CD4-positive, alpha-beta memory T cell (primary cell): ENCODE measurements at regions of chr17 and their contacts with region 1.

Region 1: DNA sequence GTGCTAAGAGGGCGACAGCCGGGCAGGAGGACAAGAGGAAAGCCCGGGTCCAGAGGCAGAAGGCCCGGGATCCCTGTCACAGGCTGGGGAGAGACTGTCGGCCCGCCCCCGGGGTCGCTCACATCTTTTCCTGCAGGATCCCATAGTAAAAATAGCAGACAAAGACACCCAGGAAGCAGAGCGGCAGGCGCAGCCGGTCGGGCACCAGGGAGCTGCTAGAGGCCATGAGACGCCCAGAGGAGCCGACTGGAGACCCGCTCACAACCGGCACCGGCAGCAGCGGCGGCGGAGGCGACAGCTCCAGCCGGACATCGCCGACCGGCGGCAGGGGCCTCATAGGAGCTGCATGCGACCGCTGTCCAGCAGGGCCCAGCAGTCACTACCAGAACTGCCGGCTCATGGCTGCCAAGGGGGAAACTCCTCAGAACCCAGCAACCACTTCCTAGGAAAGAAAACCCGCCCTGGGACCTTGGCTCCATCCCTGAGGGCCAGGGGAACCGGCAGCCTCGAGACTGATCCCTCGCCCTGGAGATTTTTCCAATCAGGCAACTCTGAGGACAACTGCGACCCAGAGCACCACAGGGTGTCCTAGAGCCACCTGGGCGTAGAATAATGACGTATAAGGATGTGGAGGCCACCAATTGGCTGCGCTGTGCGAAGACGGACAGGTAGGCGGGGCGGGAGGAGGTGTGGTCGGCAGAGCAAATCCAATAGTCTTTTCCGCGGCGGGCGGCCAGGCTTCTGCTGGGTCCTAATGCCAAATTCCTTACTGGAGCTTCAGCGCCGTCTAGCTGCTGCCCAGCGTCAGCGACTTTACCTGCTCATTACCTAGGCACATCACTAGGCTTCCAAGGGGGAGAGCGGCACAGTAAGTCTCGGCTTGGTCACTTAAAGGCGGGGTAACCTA is at the start of gene SLC35B1:
- DNase-seq: peak; percentile 97 to 99 (median 98)
- H3K4me3 ChIP-seq: peak within 1 kb of the TSS; percentile 70 to 86
- H3K4me3 Mint-ChIP-seq: peak within 1 kb of the TSS; percentile 93 to 97 (median 96)
- H3K27ac ChIP-seq: peak within 1 kb of the TSS; percentile 90
- H3K27ac Mint-ChIP-seq: peak within 1 kb of the TSS; percentile 95 to 99 (median 98)
- H3K4me1 ChIP-seq: peaks cover 33% of the 10 kb centered on the region
- H3K4me1 Mint-ChIP-seq: peaks cover 35 to 51% (median 45%) of the 10 kb centered on the region in 4 donors
- H3K27me3 ChIP-seq: no peaks in the 10 kb centered on the region
- H3K27me3 Mint-ChIP-seq: no peaks in the 10 kb centered on the region
- total RNA-seq, gene SLC35B1: 48.4 to 52.1 TPM

Region 2: DNA sequence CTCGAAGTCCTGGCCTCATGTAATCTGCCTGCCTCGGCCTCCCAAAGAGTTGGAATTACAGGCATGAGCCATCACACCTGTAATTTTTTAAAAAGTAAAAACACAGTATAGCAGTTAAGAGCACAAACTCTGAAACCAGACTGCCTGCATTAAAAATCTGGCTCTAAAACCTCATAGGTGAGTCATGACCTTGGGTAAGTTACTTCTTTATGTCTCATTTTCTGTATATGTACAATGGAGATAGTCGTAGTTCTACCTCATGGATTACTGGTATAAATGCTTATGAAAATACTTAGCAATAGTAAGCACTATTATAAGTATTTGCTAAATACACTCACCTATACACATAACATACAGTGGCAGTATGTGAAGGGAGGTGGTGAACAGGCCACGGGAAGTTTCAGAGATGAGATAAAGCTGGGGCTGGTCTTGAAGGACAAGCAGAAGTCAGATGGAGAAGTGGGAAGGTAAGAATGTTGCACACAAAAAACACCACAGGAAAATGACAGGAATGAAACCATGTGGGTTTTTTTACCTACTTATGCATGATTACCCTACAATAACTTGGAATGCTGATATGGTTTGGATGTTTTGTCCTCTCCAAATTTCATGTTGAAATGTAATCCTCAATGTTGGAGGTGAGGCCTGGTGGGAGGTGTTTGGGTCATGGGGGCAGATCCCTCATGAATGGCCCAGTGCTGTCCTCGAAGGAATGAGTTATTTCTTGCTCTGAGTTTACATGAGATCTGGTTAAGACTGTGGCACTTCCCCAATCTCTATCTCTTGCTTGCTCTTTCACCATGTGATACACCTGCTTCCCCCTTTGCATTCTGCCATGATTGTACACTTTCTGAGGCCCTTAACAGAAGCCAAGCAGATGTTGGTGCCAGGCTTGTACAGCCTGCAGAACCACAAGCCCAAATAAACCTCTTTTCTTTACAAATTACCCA is 379.8 kb before region 1 on chr17:
- CTCF ChIA-PET with region 1: no interaction called
- POLR2A ChIA-PET with region 1: no interaction called
- intact Hi-C with region 1: no loop called
- DNase-seq: no peak
- H3K4me3 ChIP-seq: no peak overlapping the region
- H3K4me3 Mint-ChIP-seq: peak overlapping the region in 4 of 8 donors; percentile 4 to 35 (median 20)
- H3K27ac ChIP-seq: no peak overlapping the region
- H3K27ac Mint-ChIP-seq: peak overlapping the region; percentile 10 to 90 (median 60)
- H3K4me1 ChIP-seq: peaks cover 26% of the 10 kb centered on the region
- H3K4me1 Mint-ChIP-seq: peaks cover 37 to 63% (median 51%) of the 10 kb centered on the region in 4 donors
- H3K27me3 ChIP-seq: no peaks in the 10 kb centered on the region
- H3K27me3 Mint-ChIP-seq: no peaks in the 10 kb centered on the region

Region 3: DNA sequence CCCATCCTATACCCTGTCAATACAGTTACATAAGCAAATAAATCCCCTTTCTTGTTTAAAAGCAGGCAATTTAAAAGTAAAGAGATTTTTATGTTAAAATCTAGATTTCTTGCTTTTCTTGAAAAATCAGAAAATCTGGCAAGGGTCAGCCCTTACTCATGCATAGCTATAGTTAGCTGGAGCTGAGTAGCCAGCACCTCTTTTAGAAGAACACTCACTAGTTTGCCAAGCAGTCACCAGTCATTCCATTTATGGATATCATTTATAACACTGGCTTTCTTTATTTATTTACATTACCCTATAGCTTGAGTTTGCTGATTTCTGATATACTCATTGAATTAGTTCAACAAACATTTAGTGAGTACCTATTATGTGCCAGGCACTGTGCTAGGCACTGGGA is 86.4 kb before region 1 on chr17:
- CTCF ChIA-PET with region 1: no interaction called
- POLR2A ChIA-PET with region 1: no interaction called
- intact Hi-C with region 1: no loop called
- DNase-seq: no peak
- H3K4me3 ChIP-seq: no peak overlapping the region
- H3K4me3 Mint-ChIP-seq: no peak overlapping the region
- H3K27ac ChIP-seq: no peak overlapping the region
- H3K27ac Mint-ChIP-seq: peak overlapping the region in 4 of 7 donors; percentile 41 to 73 (median 66)
- H3K4me1 ChIP-seq: peaks cover 15% of the 10 kb centered on the region
- H3K4me1 Mint-ChIP-seq: peaks cover 22 to 43% (median 30%) of the 10 kb centered on the region in 4 donors
- H3K27me3 ChIP-seq: no peaks in the 10 kb centered on the region
- H3K27me3 Mint-ChIP-seq: no peaks in the 10 kb centered on the region

Region 4: DNA sequence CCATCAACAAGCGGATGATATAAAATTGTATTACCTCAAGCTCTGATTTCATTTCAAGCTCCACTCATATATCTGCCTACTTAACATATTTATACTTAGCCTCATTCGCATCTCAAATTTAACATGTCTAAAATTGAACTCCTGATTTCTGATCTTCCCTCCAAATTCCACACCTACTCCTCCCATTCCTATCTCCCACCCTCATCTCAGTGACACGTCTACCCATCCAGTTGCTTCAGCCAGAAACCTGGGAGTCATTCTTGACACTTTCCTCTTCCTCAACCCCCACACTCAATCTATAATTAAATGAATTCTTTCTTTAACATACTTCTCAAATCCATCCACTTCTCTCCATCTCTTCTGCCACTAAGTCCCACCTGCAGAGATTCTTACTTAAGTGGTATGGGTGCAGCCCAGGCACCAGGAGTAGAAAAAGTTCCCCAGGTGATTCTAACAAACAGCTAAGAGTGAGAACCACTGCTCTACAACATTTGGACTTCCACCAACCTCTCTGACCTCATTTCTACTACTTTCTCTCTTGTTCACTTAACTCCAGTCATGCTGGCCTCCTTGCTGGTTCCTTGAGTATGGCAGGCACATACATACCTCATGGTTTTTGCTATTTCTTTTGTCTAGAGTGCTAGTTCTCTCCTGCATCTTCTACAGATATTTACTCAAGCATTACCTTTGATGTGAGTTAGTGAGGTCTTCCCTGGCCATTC is 48.0 kb before region 1 on chr17:
- CTCF ChIA-PET with region 1: no interaction called
- POLR2A ChIA-PET with region 1: no interaction called
- intact Hi-C with region 1: no loop called
- DNase-seq: no peak
- H3K4me3 ChIP-seq: no peak overlapping the region
- H3K4me3 Mint-ChIP-seq: peak overlapping the region in 3 of 8 donors; percentile 3 to 60 (median 13)
- H3K27ac ChIP-seq: no peak overlapping the region
- H3K27ac Mint-ChIP-seq: peak overlapping the region in 5 of 7 donors; percentile 18 to 50 (median 31)
- H3K4me1 ChIP-seq: peaks cover 34% of the 10 kb centered on the region
- H3K4me1 Mint-ChIP-seq: peaks cover 38 to 52% (median 47%) of the 10 kb centered on the region in 4 donors
- H3K27me3 ChIP-seq: no peaks in the 10 kb centered on the region
- H3K27me3 Mint-ChIP-seq: no peaks in the 10 kb centered on the region

Region 5: GRCh38 chr17:49677933-49678847 is 29.7 kb before region 1 on chr17 and contains the start of gene SPOP:
- CTCF ChIA-PET with region 1: interaction called, 4 read pairs
- POLR2A ChIA-PET with region 1: interaction called, 7 read pairs
- intact Hi-C with region 1: loop called (anchors 1 kb)
- DNase-seq: peak; percentile 99 to 100 (median 100)
- H3K4me3 ChIP-seq: peak within 1 kb of the TSS; percentile 95 to 100
- H3K4me3 Mint-ChIP-seq: peak within 1 kb of the TSS; percentile 91 to 99 (median 94)
- H3K27ac ChIP-seq: peak within 1 kb of the TSS; percentile 94
- H3K27ac Mint-ChIP-seq: peak within 1 kb of the TSS; percentile 93 to 99 (median 98)
- H3K4me1 ChIP-seq: peaks cover 42% of the 10 kb centered on the region
- H3K4me1 Mint-ChIP-seq: peaks cover 35 to 52% (median 42%) of the 10 kb centered on the region in 4 donors
- H3K27me3 ChIP-seq: no peaks in the 10 kb centered on the region
- H3K27me3 Mint-ChIP-seq: peaks cover 0 to 1% of the 10 kb centered on the region in 2 donors
- total RNA-seq, gene SPOP: 83.1 to 86.1 TPM

Region 6: GRCh38 chr17:49722066-49722465 is 14.2 kb after region 1 on chr17:
- CTCF ChIA-PET with region 1: interaction called, 12 read pairs
- POLR2A ChIA-PET with region 1: interaction called, 9 read pairs
- intact Hi-C with region 1: no loop called
- DNase-seq: no peak
- H3K4me3 ChIP-seq: no peak overlapping the region
- H3K4me3 Mint-ChIP-seq: no peak overlapping the region
- H3K27ac ChIP-seq: no peak overlapping the region
- H3K27ac Mint-ChIP-seq: peak overlapping the region; percentile 46 to 81 (median 72)
- H3K4me1 ChIP-seq: peaks cover 22% of the 10 kb centered on the region
- H3K4me1 Mint-ChIP-seq: peaks cover 18 to 46% (median 32%) of the 10 kb centered on the region in 4 donors
- H3K27me3 ChIP-seq: no peaks in the 10 kb centered on the region
- H3K27me3 Mint-ChIP-seq: no peaks in the 10 kb centered on the region

Region 7: DNA sequence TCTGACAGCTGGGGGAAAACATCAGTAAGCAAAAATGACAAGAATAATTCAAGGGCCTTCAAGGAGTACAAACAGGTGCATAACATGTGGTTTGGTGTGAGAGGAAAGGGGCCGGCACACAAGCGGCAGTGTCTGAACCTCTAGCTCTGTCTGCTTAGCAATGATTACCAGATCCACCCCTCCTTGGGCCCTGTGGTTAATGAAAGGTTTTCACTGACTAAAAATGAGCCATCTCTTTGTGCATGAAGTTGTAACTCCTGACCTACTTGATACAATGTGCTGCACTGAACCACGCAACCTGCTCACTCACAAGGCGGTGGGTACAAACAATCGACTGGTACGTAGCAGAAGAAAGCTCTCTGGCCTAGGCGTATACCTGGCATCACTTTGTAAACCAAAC is 40.9 kb after region 1 on chr17:
- CTCF ChIA-PET with region 1: interaction called, 51 read pairs
- POLR2A ChIA-PET with region 1: interaction called, 233 read pairs
- intact Hi-C with region 1: no loop called
- DNase-seq: peak; percentile 74 to 91 (median 80)
- H3K4me3 ChIP-seq: peak overlapping the region in 1 of 2 donors; percentile 27
- H3K4me3 Mint-ChIP-seq: peak overlapping the region; percentile 38 to 90 (median 80)
- H3K27ac ChIP-seq: peak overlapping the region; percentile 89
- H3K27ac Mint-ChIP-seq: peak overlapping the region; percentile 94 to 99 (median 97)
- H3K4me1 ChIP-seq: peaks cover 97% of the 10 kb centered on the region
- H3K4me1 Mint-ChIP-seq: peaks cover 56 to 91% (median 76%) of the 10 kb centered on the region in 4 donors
- H3K27me3 ChIP-seq: no peaks in the 10 kb centered on the region
- H3K27me3 Mint-ChIP-seq: no peaks in the 10 kb centered on the region

Region 8: DNA sequence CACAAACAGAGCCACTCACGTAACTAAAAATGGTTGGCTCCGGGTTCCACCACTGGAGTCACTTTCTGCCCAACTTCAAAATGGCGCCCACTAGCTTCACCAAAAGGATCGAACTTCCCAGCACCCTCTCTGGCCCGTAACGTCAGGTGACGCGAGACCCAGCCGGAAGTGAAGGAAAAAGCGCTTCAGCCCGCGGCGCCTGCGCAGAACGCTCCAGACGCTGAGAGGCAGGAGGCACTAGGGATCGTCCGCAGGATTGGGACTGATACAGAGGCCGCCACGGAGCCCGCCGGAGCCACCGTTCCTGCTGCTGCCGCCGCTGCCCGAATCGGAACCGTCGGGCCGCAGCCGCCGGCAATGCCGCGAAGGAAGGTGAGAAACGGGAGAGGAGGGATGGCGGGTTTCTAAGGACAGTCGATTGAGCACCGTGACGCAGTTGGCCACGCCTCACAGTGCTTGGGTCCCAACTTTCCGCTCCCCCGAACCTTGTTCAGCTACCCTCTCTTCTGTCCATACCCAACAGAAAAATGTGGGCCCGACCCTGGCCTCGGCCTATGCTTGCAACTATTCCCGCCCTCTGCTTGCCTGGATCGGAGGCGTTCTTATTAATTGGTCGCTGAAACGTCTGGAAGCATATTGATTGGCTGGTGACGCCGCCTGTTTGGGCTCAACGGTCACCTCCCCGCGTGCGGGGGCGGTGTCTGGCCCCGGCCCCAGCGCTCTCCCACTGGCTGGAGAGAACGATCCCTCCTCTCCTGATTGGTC is 80.8 kb after region 1 on chr17 and contains the start of gene KAT7:
- CTCF ChIA-PET with region 1: interaction called, 31 read pairs
- POLR2A ChIA-PET with region 1: interaction called, 81 read pairs
- intact Hi-C with region 1: loop called (anchors 1 kb)
- DNase-seq: peak; percentile 98 to 99 (median 99)
- H3K4me3 ChIP-seq: peak within 1 kb of the TSS; percentile 92 to 96
- H3K4me3 Mint-ChIP-seq: peak within 1 kb of the TSS; percentile 93 to 99 (median 96)
- H3K27ac ChIP-seq: peak within 1 kb of the TSS; percentile 99
- H3K27ac Mint-ChIP-seq: peak within 1 kb of the TSS; percentile 91 to 100 (median 98)
- H3K4me1 ChIP-seq: peaks cover 54% of the 10 kb centered on the region
- H3K4me1 Mint-ChIP-seq: peaks cover 38 to 65% (median 53%) of the 10 kb centered on the region in 4 donors
- H3K27me3 ChIP-seq: no peaks in the 10 kb centered on the region
- H3K27me3 Mint-ChIP-seq: no peaks in the 10 kb centered on the region
- total RNA-seq, gene KAT7: 115 to 120 TPM

Region 9: GRCh38 chr17:49899191-49899485 is 191.3 kb after region 1 on chr17:
- CTCF ChIA-PET with region 1: no interaction called
- POLR2A ChIA-PET with region 1: no interaction called
- intact Hi-C with region 1: no loop called
- DNase-seq: no peak
- H3K4me3 ChIP-seq: no peak overlapping the region
- H3K4me3 Mint-ChIP-seq: no peak overlapping the region
- H3K27ac ChIP-seq: no peak overlapping the region
- H3K27ac Mint-ChIP-seq: no peak overlapping the region
- H3K4me1 ChIP-seq: no peaks in the 10 kb centered on the region
- H3K4me1 Mint-ChIP-seq: no peaks in the 10 kb centered on the region
- H3K27me3 ChIP-seq: peaks cover 23% of the 10 kb centered on the region
- H3K27me3 Mint-ChIP-seq: peaks cover 38 to 61% of the 10 kb centered on the region in 2 donors